ENCODE measurements at regions of chr17 and their contacts with region 1.

Region 1: GRCh38 chr17:17694169-17695081 is 13.2 kb downstream of the RAI1 start:
- DNase-seq: peak; percentile 65
- H3K4me3 Mint-ChIP-seq: peak overlapping the region; percentile 80
- H3K27ac Mint-ChIP-seq: peak overlapping the region; percentile 98
- H3K4me1 Mint-ChIP-seq: peaks cover 57% of the 10 kb centered on the region
- H3K27me3 Mint-ChIP-seq: no peaks in the 10 kb centered on the region

Region 2: DNA sequence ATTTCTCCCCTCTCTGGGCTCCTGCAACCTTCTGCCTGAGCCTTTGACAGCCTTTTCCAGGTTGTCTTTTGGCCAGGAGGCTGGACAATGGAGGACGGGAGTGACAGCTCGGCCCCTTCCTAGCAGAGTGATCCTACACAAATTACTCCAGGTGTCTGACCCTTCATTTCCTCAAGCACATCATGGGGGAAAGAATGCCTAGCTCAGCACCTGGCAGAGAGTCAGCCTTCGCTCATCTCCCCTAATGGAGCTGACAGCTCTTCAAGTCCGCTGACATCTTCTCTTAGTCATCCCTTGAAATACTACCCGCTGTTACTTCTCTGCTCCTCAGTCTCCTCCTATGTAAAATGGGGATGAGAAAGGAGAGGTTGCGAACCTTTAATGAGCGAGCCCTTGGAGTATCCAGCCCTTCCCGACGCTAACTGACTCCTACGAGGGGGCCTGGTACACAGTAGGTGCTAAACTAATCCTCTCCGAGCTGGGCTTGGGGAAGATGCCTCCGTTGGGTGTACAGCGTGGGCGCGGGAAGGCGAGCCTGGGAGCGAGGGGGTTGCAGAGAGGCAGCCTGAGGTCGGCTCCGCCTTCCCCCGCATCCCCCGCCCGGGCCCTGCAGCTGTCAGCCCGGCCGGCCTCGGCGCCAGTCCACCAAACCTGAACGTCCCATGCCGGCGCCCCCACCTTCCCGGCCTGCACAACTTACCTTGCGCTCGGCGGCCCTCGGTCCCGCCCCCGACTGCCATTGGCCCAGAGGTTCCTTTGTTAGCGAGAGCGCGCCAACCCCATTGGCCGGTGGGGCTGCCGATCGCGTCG is 652.6 kb before region 1 on chr17:
- intact Hi-C with region 1: no loop called
- DNase-seq: peak; percentile 93
- H3K4me3 Mint-ChIP-seq: peak overlapping the region; percentile 72
- H3K27ac Mint-ChIP-seq: no peak overlapping the region
- H3K4me1 Mint-ChIP-seq: peaks cover 35% of the 10 kb centered on the region
- H3K27me3 Mint-ChIP-seq: no peaks in the 10 kb centered on the region

Region 3: DNA sequence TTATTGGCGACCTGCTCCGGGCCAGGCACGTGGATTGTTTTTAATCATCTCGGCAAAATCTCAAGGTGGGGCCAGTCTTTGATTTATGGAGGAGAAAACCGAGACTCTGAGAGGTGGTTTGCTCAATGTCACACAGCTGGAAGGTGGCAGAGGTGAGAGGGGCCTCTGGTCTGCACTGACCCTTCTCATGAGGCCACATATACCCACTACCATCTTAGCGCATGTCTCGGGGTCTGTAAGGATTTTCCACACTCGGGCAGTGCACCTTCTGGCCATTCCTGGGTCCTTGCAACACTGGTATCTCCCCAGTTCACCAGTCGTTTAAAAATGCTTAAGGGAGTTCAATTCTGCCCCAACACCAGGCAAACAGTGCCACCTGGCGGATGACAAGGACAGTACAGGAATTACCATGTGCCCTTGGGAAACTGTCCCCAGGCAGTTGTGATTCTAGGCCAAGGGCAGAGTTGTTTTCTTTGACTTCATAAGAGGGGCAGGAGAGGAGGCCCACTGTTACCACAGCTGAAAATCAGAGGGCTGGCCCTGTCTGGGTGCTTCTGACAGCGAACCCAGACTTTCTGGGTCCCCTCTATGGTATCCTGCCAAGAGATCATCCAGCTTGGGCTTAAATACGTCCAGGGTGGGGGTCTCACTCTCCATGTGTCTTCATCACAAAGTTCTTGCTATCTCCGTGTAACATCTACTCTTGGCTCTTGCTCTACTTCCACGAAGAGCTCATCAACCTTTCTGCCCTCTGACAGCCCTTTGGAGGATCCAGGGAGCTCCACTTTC is 52.6 kb before region 1 on chr17:
- intact Hi-C with region 1: no loop called
- DNase-seq: peak; percentile 67
- H3K4me3 Mint-ChIP-seq: no peak overlapping the region
- H3K27ac Mint-ChIP-seq: no peak overlapping the region
- H3K4me1 Mint-ChIP-seq: no peaks in the 10 kb centered on the region
- H3K27me3 Mint-ChIP-seq: no peaks in the 10 kb centered on the region

Region 4: DNA sequence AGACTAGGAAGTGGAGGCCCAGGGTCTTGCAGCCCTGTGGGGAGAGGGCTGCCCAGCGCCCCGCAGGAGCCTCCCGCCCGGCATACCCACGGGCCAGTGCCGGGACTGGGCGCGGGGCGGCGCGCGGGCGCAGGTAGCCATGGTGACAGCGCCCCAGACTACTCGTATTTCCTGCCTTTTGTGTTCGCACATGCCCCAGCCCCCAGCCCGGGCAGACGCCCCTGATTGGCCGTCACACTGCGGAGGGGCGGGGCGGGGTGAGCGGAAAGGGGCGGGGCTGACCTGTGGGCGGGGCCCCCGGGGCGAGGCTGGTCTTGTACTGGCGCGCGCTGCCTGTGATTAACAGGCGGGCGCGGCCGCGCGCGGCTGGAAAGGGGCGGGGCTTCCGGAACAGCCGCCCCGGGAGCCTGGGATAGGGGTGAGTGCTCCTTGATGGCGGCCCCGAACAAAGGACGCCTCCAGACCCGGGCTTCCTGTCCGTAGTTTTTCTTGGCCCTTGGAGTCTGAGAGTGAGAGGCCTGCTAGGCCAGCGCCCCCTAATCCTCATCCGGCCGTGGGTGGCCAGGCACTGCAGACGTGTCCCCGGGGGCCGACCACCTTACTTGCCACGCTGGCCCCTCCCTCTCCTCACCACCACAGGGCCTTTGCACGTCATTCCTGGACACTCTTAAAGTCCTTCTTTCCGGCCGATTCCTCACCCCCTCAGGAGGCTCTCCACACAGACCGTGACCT is 57.8 kb after region 1 on chr17:
- intact Hi-C with region 1: loop called (anchors 1 kb)
- DNase-seq: peak; percentile 96
- H3K4me3 Mint-ChIP-seq: peak overlapping the region; percentile 89
- H3K27ac Mint-ChIP-seq: peak overlapping the region; percentile 93
- H3K4me1 Mint-ChIP-seq: peaks cover 39% of the 10 kb centered on the region
- H3K27me3 Mint-ChIP-seq: no peaks in the 10 kb centered on the region

Region 5: GRCh38 chr17:18056212-18056611 is 361.8 kb after region 1 on chr17:
- intact Hi-C with region 1: no loop called
- DNase-seq: no peak
- H3K4me3 Mint-ChIP-seq: no peak overlapping the region
- H3K27ac Mint-ChIP-seq: no peak overlapping the region
- H3K4me1 Mint-ChIP-seq: peaks cover 10% of the 10 kb centered on the region
- H3K27me3 Mint-ChIP-seq: no peaks in the 10 kb centered on the region